ENCODE measurements at regions of chr9 and their contacts with region 1.

Region 1: GRCh38 chr9:111597817-111598729 is 1.4 kb downstream of the PTGR1 start:
- DNase-seq: peak; percentile 62
- H3K4me3 ChIP-seq: peak overlapping the region; percentile 70 to 98 (median 75)
- H3K27ac ChIP-seq: peak overlapping the region; percentile 60
- H3K4me1 ChIP-seq: peaks cover 12% of the 10 kb centered on the region
- H3K27me3 ChIP-seq: no peaks in the 10 kb centered on the region
- CTCF ChIP-seq: peak; percentile 75 to 85

Region 2: GRCh38 chr9:111631071-111631971 is 33.2 kb after region 1 on chr9 and contains the start of gene DNAJC25:
- CTCF ChIA-PET with region 1: no interaction called
- dilution Hi-C with region 1: no loop called
- in situ Hi-C with region 1: no loop called
- intact Hi-C with region 1: loop called (anchors 1 kb)
- DNase-seq: peak; percentile 98
- H3K4me3 ChIP-seq: peak within 1 kb of the TSS; percentile 92 to 94 (median 92)
- H3K27ac ChIP-seq: peak within 1 kb of the TSS; percentile 88
- H3K4me1 ChIP-seq: peaks cover 5% of the 10 kb centered on the region
- H3K27me3 ChIP-seq: no peaks in the 10 kb centered on the region
- CTCF ChIP-seq: no peak
- total RNA-seq, gene DNAJC25: 4.5 to 9.4 TPM

Region 3: GRCh38 chr9:111691672-111692329 is 93.7 kb after region 1 on chr9:
- CTCF ChIA-PET with region 1: no interaction called
- dilution Hi-C with region 1: no loop called
- in situ Hi-C with region 1: no loop called
- intact Hi-C with region 1: loop called (anchors 1 kb)
- DNase-seq: peak; percentile 35
- H3K4me3 ChIP-seq: no peak overlapping the region
- H3K27ac ChIP-seq: no peak overlapping the region
- H3K4me1 ChIP-seq: no peaks in the 10 kb centered on the region
- H3K27me3 ChIP-seq: no peaks in the 10 kb centered on the region
- CTCF ChIP-seq: peak; percentile 22 to 46

Region 4: DNA sequence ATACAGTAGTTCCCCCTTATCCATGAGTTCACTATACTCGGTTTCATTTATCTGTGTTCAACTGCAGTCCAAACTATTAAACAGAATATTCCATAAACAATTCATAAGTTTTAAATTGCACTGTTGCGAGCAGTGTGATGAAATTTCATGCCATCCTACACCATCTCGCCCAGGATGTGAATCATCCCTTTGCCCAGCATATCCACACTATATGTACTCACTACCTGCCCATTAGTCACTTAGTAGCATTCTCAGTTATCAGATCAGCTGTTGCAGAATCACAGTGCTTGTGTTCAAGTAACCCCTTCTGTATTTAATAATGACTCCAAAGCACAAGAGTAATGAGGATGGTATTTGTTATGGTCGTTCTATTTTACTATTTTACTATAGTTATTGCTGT is 145.2 kb after region 1 on chr9:
- CTCF ChIA-PET with region 1: no interaction called
- dilution Hi-C with region 1: no loop called
- in situ Hi-C with region 1: no loop called
- intact Hi-C with region 1: loop called (anchors 5 kb)
- DNase-seq: peak; percentile 93
- H3K4me3 ChIP-seq: no peak overlapping the region
- H3K27ac ChIP-seq: peak overlapping the region; percentile 97
- H3K4me1 ChIP-seq: peaks cover 26% of the 10 kb centered on the region
- H3K27me3 ChIP-seq: no peaks in the 10 kb centered on the region
- CTCF ChIP-seq: no peak

Region 5: GRCh38 chr9:111828193-111828592 is 230.1 kb after region 1 on chr9:
- CTCF ChIA-PET with region 1: interaction called, 16 read pairs
- dilution Hi-C with region 1: no loop called
- in situ Hi-C with region 1: no loop called
- intact Hi-C with region 1: no loop called
- DNase-seq: no peak
- H3K4me3 ChIP-seq: no peak overlapping the region
- H3K27ac ChIP-seq: no peak overlapping the region
- H3K4me1 ChIP-seq: peaks cover 18% of the 10 kb centered on the region
- H3K27me3 ChIP-seq: no peaks in the 10 kb centered on the region
- CTCF ChIP-seq: peak in 1 of 2 donors; percentile 27

Region 6: DNA sequence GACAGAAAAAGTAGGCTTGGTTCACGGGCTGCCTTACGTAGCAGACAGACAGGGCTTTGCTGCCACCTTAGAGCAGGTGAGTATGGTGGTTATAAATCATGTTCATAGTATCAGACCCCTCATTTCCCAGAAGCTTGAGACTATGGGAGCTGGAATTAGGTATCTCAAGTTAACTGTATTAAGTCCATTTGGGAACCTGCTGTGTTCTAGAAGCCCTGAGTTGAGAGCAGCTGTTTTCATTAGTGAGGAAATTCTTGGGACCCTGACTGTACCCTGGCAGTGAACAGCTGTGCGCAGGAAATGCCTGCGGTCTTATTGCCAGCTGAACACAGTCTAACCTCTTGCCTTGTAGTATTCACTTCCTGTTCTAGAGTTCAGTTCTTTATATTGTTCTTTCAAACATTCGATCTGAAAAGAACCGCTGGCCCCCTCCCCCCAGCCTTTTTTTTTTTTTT is 328.4 kb after region 1 on chr9:
- CTCF ChIA-PET with region 1: no interaction called
- dilution Hi-C with region 1: no loop called
- in situ Hi-C with region 1: no loop called
- intact Hi-C with region 1: loop called (anchors 5 kb)
- DNase-seq: no peak
- H3K4me3 ChIP-seq: no peak overlapping the region
- H3K27ac ChIP-seq: no peak overlapping the region
- H3K4me1 ChIP-seq: peaks cover 7% of the 10 kb centered on the region
- H3K27me3 ChIP-seq: no peaks in the 10 kb centered on the region
- CTCF ChIP-seq: no peak

Region 7: GRCh38 chr9:112097712-112098688 is 499.9 kb after region 1 on chr9:
- CTCF ChIA-PET with region 1: no interaction called
- dilution Hi-C with region 1: no loop called
- in situ Hi-C with region 1: loop called in 1 of 2 experiments (anchors 25 kb)
- intact Hi-C with region 1: no loop called
- DNase-seq: peak; percentile 55
- H3K4me3 ChIP-seq: no peak overlapping the region
- H3K27ac ChIP-seq: no peak overlapping the region
- H3K4me1 ChIP-seq: no peaks in the 10 kb centered on the region
- H3K27me3 ChIP-seq: no peaks in the 10 kb centered on the region
- CTCF ChIP-seq: peak; percentile 83 to 86

Measured in mammary epithelial cell (primary cell).